Right ventricle myocardium superior (tissue), 1 donor: ENCODE measurements at regions of chr9 and their contacts with region 1.

Region 1: GRCh38 chr9:13878241-13878711 is 435.7 kb downstream of the NFIB start:
- DNase-seq: no peak
- ATAC-seq: no peak

Region 2: DNA sequence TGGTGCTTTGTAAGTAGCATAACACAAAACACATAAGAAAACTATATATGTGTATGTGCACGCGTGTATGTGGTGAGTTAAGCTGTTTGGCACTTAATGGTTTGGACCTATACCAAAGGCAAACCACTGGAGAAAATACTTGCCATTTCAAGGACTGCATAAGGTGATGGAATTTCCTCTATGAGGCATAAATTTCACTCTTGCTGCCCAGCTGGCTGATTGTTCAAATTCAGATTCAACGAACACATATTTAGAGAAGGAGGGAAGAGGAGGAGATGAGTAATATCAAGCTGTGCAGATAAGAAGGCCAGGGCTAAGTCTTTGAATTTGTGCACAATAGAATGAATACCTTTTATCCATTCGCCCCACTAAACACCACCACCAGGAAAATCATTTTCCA is 128.2 kb before region 1 on chr9:
- intact Hi-C with region 1: no loop called
- DNase-seq: no peak
- ATAC-seq: no peak

Region 3: DNA sequence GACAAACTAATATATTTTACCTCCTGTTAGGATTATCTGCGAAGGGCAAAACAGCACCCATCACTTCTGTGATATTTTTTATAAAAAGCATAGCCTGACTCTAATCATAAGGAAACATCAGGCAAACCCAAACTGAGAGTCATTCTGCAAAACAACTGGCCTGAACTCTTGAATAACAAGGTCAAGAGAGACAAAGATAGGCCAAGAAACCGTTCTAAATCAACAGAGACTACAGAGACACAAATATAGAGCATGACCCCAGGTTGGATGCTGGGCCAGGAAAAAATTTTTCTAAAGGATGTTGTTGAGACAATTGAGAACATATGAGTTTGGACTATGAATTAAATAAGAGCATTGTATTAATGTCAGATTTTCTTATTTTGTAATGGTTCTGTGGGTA is 50.7 kb after region 1 on chr9:
- intact Hi-C with region 1: loop called (anchors 10 kb)
- DNase-seq: no peak
- ATAC-seq: no peak